Psoas muscle (tissue), 8 donors: ENCODE measurements at regions of chr5 and their contacts with region 1.

Region 1: GRCh38 chr5:148826053-148826738 is at the start of gene ADRB2:
- DNase-seq: peak; percentile 93 to 97
- ATAC-seq: peak; percentile 90 to 94 (median 92)
- H3K4me3 ChIP-seq: peak within 1 kb of the TSS; percentile 86
- H3K27ac ChIP-seq: peak within 1 kb of the TSS; percentile 96
- H3K4me1 ChIP-seq: peaks cover 30% of the 10 kb centered on the region
- H3K27me3 ChIP-seq: no peaks in the 10 kb centered on the region
- CTCF ChIP-seq: no peak
- total RNA-seq, gene ADRB2: 4.8 to 11.1 (median 7.9) TPM

Region 2: DNA sequence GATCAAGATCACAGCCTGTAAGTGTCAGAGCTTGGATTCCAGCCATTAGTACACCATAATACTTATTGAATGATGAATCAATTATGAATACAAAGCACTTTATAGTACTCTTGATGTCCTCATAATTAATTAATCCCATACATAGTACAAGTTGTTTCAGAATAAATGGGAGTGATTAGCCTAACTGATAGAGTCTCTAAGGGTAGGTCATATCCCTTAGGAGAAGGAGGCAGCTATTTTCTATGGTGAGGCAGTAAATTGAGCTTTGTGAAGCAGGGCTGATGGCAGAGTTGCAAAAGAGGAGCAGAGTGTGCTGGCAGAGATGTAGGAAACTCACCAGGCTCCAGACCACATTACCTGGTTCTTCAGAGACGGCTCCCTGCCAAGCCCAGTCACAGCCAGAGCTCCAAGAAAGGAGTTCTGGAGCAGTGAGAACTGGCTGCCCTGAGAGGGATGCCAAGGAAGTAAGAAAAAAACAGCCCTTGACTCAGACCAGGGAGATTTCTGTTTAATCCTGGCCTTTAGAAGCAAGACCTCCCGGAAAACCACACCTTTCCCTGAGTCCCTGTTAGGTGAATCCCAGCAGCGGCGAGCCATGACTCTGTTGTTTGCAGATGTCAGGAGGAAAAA is 123.8 kb after region 1 on chr5:
- intact Hi-C with region 1: loop called (anchors 5 kb)
- DNase-seq: peak; percentile 73 to 93
- ATAC-seq: peak; percentile 92 to 95 (median 95)
- H3K4me3 ChIP-seq: peak overlapping the region; percentile 29
- H3K27ac ChIP-seq: peak overlapping the region; percentile 97
- H3K4me1 ChIP-seq: peaks cover 22% of the 10 kb centered on the region
- H3K27me3 ChIP-seq: no peaks in the 10 kb centered on the region
- CTCF ChIP-seq: no peak

Region 3: GRCh38 chr5:148957591-148958202 is 131.5 kb after region 1 on chr5:
- intact Hi-C with region 1: loop called (anchors 5 kb)
- DNase-seq: no peak
- ATAC-seq: peak in 2 of 4 donors; percentile 50 to 65
- H3K4me3 ChIP-seq: no peak overlapping the region
- H3K27ac ChIP-seq: no peak overlapping the region
- H3K4me1 ChIP-seq: peaks cover 5% of the 10 kb centered on the region
- H3K27me3 ChIP-seq: no peaks in the 10 kb centered on the region
- CTCF ChIP-seq: peak; percentile 84

Region 4: DNA sequence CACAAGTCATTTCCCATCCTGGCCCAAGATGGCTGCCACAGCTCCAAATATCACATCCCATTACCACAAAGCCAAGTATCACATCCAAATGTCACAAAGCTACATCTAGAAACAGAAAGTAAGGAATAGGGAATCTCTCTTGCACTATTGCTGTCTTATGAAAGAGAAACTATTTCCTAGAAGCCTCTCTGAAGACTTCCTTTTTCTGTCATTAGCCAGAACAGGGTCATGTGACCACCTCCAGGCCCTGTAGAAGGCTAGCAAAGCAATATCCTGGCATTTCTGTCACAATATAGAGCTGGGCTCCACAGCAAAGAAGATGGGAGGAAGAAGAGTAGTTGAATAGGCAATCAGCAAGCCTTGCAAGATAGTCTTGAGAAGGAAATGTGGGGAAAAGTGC is 137.5 kb after region 1 on chr5:
- intact Hi-C with region 1: loop called (anchors 5 kb)
- DNase-seq: no peak
- ATAC-seq: no peak
- H3K4me3 ChIP-seq: no peak overlapping the region
- H3K27ac ChIP-seq: no peak overlapping the region
- H3K4me1 ChIP-seq: peaks cover 37% of the 10 kb centered on the region
- H3K27me3 ChIP-seq: no peaks in the 10 kb centered on the region
- CTCF ChIP-seq: no peak

Region 5: DNA sequence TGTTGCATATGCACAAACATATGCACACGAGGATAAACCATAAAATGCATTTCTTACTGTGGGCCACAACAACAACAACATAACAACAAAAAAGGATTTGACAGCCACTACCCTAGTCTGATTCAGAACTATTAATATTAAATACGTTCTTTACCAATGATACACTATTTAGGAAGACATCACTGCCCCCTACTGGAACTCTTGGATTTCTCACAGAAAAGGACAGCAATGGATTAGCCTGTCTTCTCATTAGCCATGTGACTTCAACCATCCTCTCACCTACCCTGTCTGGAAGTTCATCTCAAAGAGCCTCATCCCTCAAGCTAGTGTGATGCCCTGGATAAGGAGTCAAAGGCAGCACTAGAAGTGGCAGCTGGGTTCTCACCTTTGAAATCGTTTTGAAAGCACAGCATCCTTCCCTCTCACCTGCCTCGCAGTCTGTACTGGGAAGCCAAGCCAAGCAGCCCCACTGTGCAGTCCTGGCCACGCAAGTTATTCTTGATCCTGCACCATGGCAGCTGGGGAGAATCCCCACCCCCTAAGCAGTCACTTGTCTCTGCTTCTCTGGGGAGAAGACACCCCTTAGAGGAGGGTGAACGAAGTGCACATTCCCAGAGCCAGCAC is 172.1 kb after region 1 on chr5:
- intact Hi-C with region 1: loop called (anchors 5 kb)
- DNase-seq: no peak
- ATAC-seq: peak; percentile 57 to 76 (median 65)
- H3K4me3 ChIP-seq: no peak overlapping the region
- H3K27ac ChIP-seq: no peak overlapping the region
- H3K4me1 ChIP-seq: peaks cover 45% of the 10 kb centered on the region
- H3K27me3 ChIP-seq: no peaks in the 10 kb centered on the region
- CTCF ChIP-seq: peak; percentile 75

Region 6: GRCh38 chr5:149114403-149115312 is 288.5 kb after region 1 on chr5:
- intact Hi-C with region 1: loop called in 1 of 2 experiments (anchors 5 kb)
- DNase-seq: peak in 1 of 2 donors; percentile 57
- ATAC-seq: peak; percentile 88 to 98 (median 94)
- H3K4me3 ChIP-seq: no peak overlapping the region
- H3K27ac ChIP-seq: no peak overlapping the region
- H3K4me1 ChIP-seq: no peaks in the 10 kb centered on the region
- H3K27me3 ChIP-seq: no peaks in the 10 kb centered on the region
- CTCF ChIP-seq: peak; percentile 79